ENCODE measurements at regions of chr16 and their contacts with region 1.

Region 1: GRCh38 chr16:46607529-46607928 is 13.7 kb downstream of the SHCBP1 start:
- DNase-seq: peak; percentile 48
- H3K4me3 ChIP-seq: no peak overlapping the region
- H3K27ac ChIP-seq: no peak overlapping the region
- H3K4me1 ChIP-seq: peaks cover 9% of the 10 kb centered on the region
- CTCF ChIP-seq: peak; percentile 76

Region 2: GRCh38 chr16:46555951-46556350 is 51.6 kb before region 1 on chr16:
- CTCF ChIA-PET with region 1: no interaction called
- POLR2A ChIA-PET with region 1: interaction called, 6 read pairs
- intact Hi-C with region 1: loop called (anchors 2 kb)
- DNase-seq: no peak
- H3K4me3 ChIP-seq: no peak overlapping the region
- H3K27ac ChIP-seq: no peak overlapping the region
- H3K4me1 ChIP-seq: no peaks in the 10 kb centered on the region
- CTCF ChIP-seq: no peak

Measured in OCI-LY7 (cell line).